ENCODE measurements at regions of chr5 and their contacts with region 1.

Region 1: GRCh38 chr5:170633235-170634081 is 129.6 kb downstream of the KCNIP1 start:
- DNase-seq: peak; percentile 36
- H3K4me3 ChIP-seq: peak overlapping the region; percentile 44
- H3K27ac ChIP-seq: peak overlapping the region; percentile 0
- H3K27me3 ChIP-seq: no peaks in the 10 kb centered on the region
- CTCF ChIP-seq: no peak

Region 2: DNA sequence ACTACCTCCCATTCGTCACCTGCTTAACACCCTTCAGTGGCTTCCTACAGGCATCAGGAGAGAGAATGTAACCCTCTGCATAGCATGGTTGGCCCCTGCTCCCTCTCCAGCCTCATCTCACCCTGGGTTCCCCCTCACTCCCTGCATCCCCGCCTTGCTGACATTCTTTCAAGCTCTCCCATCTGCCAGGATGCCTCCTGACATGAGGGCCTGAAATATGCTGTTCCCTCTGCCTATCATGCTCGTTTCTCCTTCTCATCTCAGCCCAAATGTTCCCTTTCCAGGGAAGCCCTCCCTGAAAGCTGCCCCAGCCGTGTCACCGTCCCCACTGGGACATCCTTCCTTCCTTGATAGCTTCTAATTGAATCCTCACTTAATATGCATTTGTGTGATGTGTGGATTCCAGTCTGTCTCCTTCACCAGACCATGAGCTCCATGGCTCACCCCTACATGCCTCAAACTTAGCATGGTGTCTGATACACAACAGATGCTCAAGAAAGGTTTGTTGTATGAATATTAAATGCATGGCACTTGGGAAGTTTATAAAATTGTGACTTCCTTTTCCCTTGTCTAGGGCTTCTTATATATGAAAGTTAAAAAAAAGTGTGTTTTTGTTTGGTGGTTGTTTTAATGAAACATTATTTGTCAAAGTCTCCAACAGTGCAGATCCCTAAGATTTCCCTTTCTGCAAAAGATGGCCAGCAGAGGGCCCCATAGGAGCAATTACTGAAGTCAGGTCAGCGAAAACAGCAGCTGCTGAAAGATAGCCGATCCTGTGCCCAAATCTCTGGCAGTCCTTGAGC is 407.9 kb before region 1 on chr5:
- CTCF ChIA-PET with region 1: interaction called, 10 read pairs
- POLR2A ChIA-PET with region 1: no interaction called
- DNase-seq: no peak
- H3K4me3 ChIP-seq: no peak overlapping the region
- H3K27ac ChIP-seq: no peak overlapping the region
- H3K27me3 ChIP-seq: no peaks in the 10 kb centered on the region
- CTCF ChIP-seq: peak; percentile 71

Region 3: DNA sequence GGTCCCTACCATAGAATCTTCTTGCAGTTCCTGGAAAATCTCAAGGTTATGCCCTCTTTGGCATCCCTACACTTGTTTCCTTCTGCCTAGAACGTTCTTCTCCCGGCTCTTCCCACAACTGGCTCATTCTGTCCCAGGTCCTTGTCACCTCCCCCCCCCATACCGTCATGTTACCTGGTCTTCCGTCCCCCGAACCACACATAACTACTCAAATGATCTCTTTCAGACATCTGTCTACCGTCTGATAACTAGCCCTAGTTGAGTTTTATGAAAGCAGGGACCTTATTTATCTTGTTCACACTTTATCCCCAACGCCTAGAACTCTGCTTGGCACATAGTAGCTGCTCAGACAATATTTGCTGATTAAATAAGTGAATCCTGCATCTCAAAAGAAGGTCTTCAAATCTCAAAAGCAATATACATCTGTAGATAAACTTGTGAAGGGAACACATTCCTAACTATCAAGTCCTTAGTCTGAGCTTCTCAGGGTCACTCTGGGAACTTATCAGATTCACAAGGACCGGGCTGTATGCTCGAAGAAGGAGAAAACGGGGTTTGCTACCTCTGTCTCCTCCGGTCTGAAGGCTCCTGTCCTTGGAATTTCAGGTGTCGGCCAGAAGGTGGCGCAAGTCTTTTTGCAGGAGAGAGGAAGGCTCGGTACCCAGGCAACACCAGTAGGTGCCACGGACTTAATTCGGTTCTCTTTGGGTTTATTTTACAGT is 365.9 kb before region 1 on chr5:
- CTCF ChIA-PET with region 1: interaction called, 12 read pairs
- POLR2A ChIA-PET with region 1: no interaction called
- DNase-seq: peak; percentile 27
- H3K4me3 ChIP-seq: no peak overlapping the region
- H3K27ac ChIP-seq: no peak overlapping the region
- H3K27me3 ChIP-seq: peaks cover 14% of the 10 kb centered on the region
- CTCF ChIP-seq: peak; percentile 83

Region 4: DNA sequence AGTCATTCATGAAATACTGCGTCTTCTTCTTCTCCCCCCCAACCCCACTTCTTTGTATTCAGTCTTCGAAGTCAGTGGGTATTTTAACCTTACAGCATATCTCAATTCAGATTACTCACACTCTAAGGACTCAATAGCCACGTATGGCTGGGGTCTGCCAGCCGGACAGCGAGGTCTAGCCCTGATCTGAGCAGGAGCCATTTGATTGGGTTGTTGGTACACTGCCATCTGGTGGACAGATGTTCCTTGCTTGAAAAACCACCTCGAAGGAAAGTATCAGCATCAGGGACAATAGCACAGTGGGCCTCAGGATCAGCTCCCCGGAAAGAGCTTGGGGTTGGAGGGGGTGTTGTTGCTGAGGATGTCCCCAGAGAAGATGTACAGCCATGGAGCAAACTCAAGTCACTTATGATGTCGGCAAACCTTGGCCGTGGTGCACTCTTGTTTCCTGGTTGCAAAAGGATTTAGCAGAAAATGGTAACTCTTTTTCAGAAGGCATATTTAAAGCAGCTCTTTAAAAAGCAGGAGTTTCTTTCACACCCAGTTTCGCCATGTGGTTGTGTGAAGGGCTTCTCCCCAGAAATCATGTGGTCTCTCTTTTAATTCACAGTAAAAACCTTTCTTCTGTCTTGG is 212.6 kb before region 1 on chr5:
- CTCF ChIA-PET with region 1: interaction called, 32 read pairs
- POLR2A ChIA-PET with region 1: no interaction called
- DNase-seq: peak; percentile 36
- H3K4me3 ChIP-seq: no peak overlapping the region
- H3K27ac ChIP-seq: no peak overlapping the region
- H3K27me3 ChIP-seq: peaks cover 12% of the 10 kb centered on the region
- CTCF ChIP-seq: peak; percentile 72

Region 5: GRCh38 chr5:170429014-170429413 is 204.4 kb before region 1 on chr5:
- CTCF ChIA-PET with region 1: interaction called, 135 read pairs
- POLR2A ChIA-PET with region 1: no interaction called
- DNase-seq: no peak
- H3K4me3 ChIP-seq: no peak overlapping the region
- H3K27ac ChIP-seq: no peak overlapping the region
- H3K27me3 ChIP-seq: peaks cover 12% of the 10 kb centered on the region
- CTCF ChIP-seq: peak; percentile 36; the same call in 1 of the 2 replicates

Region 6: GRCh38 chr5:170434966-170435605 is 198.4 kb before region 1 on chr5:
- CTCF ChIA-PET with region 1: interaction called, 135 read pairs
- POLR2A ChIA-PET with region 1: no interaction called
- DNase-seq: peak; percentile 23
- H3K4me3 ChIP-seq: no peak overlapping the region
- H3K27ac ChIP-seq: no peak overlapping the region
- H3K27me3 ChIP-seq: peaks cover 15% of the 10 kb centered on the region
- CTCF ChIP-seq: peak; percentile 98

Region 7: GRCh38 chr5:170614720-170615119 is 18.7 kb before region 1 on chr5:
- CTCF ChIA-PET with region 1: interaction called, 10 read pairs
- POLR2A ChIA-PET with region 1: no interaction called
- DNase-seq: no peak
- H3K4me3 ChIP-seq: no peak overlapping the region
- H3K27ac ChIP-seq: no peak overlapping the region
- H3K27me3 ChIP-seq: no peaks in the 10 kb centered on the region
- CTCF ChIP-seq: no peak

Measured in AG04450 (cell line).